BJ (cell line): ENCODE measurements at regions of chr19 and their contacts with region 1.

Region 1: GRCh38 chr19:58519355-58520256 is at the start of gene ZBTB45:
- DNase-seq: peak; percentile 77
- H3K4me3 ChIP-seq: peak within 1 kb of the TSS; percentile 73
- H3K27me3 ChIP-seq: no peaks in the 10 kb centered on the region
- CTCF ChIP-seq: peak; percentile 85
- polyA plus RNA-seq, gene ZBTB45: 5.2 and 9.5 TPM in 2 replicates

Region 2: DNA sequence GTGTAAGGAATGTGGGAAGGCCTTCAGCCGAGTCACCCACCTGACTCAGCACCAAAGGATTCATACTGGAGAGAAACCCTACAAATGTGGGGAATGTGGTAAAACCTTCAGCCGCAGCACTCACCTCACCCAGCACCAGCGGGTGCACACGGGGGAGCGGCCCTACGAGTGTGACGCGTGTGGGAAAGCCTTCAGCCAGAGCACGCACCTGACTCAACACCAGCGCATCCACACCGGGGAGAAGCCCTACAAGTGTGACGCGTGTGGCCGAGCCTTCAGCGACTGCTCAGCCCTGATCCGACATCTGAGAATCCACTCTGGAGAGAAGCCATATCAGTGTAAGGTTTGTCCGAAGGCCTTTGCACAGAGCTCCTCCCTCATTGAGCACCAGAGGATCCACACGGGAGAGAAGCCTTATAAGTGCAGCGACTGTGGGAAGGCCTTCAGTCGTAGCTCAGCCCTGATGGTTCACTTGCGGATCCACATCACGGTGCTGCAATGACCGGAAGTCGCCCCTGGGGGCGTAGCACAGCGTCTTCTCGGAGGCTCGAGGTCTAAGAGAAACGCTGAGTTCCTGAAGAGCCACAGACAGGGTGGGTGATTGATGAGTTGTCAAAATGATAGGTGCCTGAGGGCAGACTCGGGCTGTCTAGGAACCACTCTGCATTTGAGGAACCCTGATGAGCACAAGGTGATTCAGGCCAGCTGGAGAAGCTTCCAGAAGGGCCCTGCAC is 180.6 kb before region 1 on chr19:
- CTCF ChIA-PET with region 1: no interaction called
- POLR2A ChIA-PET with region 1: no interaction called
- DNase-seq: no peak
- H3K4me3 ChIP-seq: no peak overlapping the region
- H3K27me3 ChIP-seq: no peaks in the 10 kb centered on the region
- CTCF ChIP-seq: no peak

Region 3: DNA sequence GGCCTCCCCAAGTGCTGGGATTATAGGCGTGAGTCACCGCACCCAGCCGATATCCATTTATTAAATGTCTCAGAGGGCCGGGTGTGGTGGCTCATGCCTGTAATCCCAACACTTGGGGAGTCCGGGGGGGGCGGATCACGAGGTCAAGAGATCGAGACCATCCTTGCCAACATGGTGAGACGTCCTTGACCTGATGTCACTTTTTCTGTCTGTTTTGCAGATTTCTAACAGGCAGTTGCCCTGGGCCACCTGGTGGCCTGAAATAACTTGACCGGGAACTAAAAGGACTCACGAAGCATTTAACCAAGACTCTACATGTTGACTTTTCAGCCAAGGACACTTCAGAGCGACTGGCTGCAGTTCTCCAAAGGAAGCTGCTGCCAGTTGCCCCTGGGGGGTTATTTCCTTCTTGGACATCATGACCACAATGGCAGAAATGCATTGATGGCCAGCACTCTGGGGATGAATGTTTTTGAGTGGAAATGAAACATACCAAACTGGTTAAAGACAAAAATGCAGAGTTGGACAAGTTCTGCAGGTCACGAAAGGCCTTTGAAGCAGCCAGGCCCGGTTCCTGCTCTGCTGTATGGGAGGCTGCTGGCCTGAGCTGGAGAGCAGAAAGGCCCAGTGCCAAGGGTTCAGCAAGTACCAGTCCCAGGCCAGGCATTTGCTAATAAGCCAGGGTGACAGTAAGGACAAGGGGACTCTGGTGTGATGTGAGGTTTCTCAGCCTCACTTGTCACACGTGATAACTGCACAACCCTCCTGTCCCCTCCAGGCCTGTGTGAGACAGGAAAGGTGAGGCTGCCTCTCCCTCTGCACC is 147.1 kb before region 1 on chr19:
- CTCF ChIA-PET with region 1: no interaction called
- POLR2A ChIA-PET with region 1: no interaction called
- DNase-seq: no peak
- H3K4me3 ChIP-seq: no peak overlapping the region
- H3K27me3 ChIP-seq: no peaks in the 10 kb centered on the region
- CTCF ChIP-seq: no peak

Region 4: GRCh38 chr19:58499021-58499927 is 20.3 kb before region 1 on chr19:
- CTCF ChIA-PET with region 1: interaction called, 12 read pairs
- POLR2A ChIA-PET with region 1: no interaction called
- DNase-seq: peak; percentile 93
- H3K4me3 ChIP-seq: peak overlapping the region; percentile 68
- H3K27me3 ChIP-seq: no peaks in the 10 kb centered on the region
- CTCF ChIP-seq: peak; percentile 57

Region 5: GRCh38 chr19:58531034-58531840 is 11.6 kb after region 1 on chr19:
- CTCF ChIA-PET with region 1: interaction called, 21 read pairs
- POLR2A ChIA-PET with region 1: no interaction called
- DNase-seq: no peak
- H3K4me3 ChIP-seq: no peak overlapping the region
- H3K27me3 ChIP-seq: peaks cover 9% of the 10 kb centered on the region
- CTCF ChIP-seq: no peak

Region 6: GRCh38 chr19:58543826-58544590 is 24.4 kb after region 1 on chr19 and contains the start of gene TRIM28:
- CTCF ChIA-PET with region 1: interaction called, 43 read pairs
- POLR2A ChIA-PET with region 1: interaction called, 8 read pairs
- DNase-seq: peak; percentile 97
- H3K4me3 ChIP-seq: peak within 1 kb of the TSS; percentile 96
- H3K27me3 ChIP-seq: peaks cover 10% of the 10 kb centered on the region
- CTCF ChIP-seq: no peak
- polyA plus RNA-seq, gene TRIM28: 210 and 476 TPM in 2 replicates

Region 7: GRCh38 chr19:58554494-58555368 is 35.1 kb after region 1 on chr19 and contains the start of gene CHMP2A:
- CTCF ChIA-PET with region 1: interaction called, 43 read pairs
- POLR2A ChIA-PET with region 1: interaction called, 3 read pairs
- DNase-seq: peak; percentile 72
- H3K4me3 ChIP-seq: peak within 1 kb of the TSS; percentile 71
- H3K27me3 ChIP-seq: no peaks in the 10 kb centered on the region
- CTCF ChIP-seq: no peak
- polyA plus RNA-seq, gene CHMP2A: 153 and 174 TPM in 2 replicates

Region 8: GRCh38 chr19:58562195-58563033 is 42.8 kb after region 1 on chr19:
- CTCF ChIA-PET with region 1: interaction called, 20 read pairs
- POLR2A ChIA-PET with region 1: interaction called, 3 read pairs
- DNase-seq: no peak
- H3K4me3 ChIP-seq: peak overlapping the region; percentile 38
- H3K27me3 ChIP-seq: no peaks in the 10 kb centered on the region
- CTCF ChIP-seq: no peak

Region 9: DNA sequence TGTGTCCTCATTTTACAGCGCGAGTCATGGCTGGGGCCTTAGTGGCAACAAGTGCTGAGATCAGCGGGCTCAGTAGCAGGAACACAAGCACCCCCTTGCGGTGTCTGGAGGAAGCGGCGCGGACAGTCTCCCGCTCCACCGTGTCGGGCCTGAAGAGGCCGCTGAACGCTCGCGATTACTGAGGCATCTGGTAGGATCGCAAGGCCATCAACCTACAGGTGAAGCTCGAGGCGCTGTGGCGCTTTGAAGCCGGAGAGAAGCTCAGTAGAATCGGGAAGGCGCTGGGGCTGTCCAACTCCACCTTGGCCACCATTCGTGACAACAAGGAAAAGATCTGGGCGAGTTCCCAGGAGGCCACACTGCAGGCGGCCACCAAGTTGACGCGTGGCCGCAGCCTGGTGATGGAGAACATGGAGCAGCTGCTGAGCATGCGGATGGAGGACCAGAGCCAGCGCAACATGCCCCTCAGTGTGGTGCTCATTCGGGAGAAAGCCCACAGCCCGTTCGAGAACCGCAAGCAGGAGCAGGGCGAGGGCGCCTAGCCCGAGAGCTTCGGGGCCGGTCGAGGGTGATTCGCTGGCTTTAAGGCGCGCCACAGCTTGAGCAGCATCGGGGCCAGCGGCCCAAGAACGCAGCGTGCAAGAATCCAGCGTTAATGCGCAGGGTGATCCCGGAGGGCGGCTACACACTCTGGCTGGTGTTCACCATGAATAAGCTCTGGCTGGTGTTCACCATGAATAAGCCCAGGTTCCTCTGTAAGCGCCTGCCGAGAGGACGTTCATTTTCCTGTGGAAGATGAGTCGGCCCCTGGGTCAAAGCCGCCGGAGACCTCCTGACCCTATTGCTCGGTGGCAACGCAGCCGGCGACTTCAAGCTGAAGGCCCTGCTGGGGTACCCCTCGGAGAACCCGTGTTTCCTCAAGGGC is 61.9 kb after region 1 on chr19:
- CTCF ChIA-PET with region 1: interaction called, 66 read pairs
- POLR2A ChIA-PET with region 1: no interaction called
- DNase-seq: peak; percentile 63
- H3K4me3 ChIP-seq: no peak overlapping the region
- H3K27me3 ChIP-seq: no peaks in the 10 kb centered on the region
- CTCF ChIP-seq: peak; percentile 99